Activated T-helper 1 cell treated with anti-CD3 and anti-CD28 coated beads, Interleukin-12 subunit alpha, Interleukin-12 subunit beta, Interleukin-2, Interleukin-4 antibody, amounts not matched to agents 30 ng/mL and 10 ng/mL and 1 ng/mL, durations not matched to agents 14 hours and 24 hours and 36 hours (primary cell): ENCODE measurements at regions of chr10 and their contacts with region 1.

Region 1: GRCh38 chr10:71850637-71851464 is at the start of gene PSAP:
- DNase-seq: peak; percentile 99
- H3K4me3 Mint-ChIP-seq: peak within 1 kb of the TSS; percentile 97
- H3K27ac Mint-ChIP-seq: peak within 1 kb of the TSS; percentile 85
- H3K4me1 Mint-ChIP-seq: peaks cover 42% of the 10 kb centered on the region
- H3K27me3 Mint-ChIP-seq: no peaks in the 10 kb centered on the region
- total RNA-seq, gene PSAP: 117 and 122 TPM in 2 replicates

Region 2: GRCh38 chr10:71372882-71373495 is 477.9 kb before region 1 on chr10:
- intact Hi-C with region 1: loop called (anchors 2 kb)
- DNase-seq: no peak
- H3K4me3 Mint-ChIP-seq: no peak overlapping the region
- H3K27ac Mint-ChIP-seq: no peak overlapping the region
- H3K4me1 Mint-ChIP-seq: peaks cover 14% of the 10 kb centered on the region
- H3K27me3 Mint-ChIP-seq: peaks cover 7% of the 10 kb centered on the region

Region 3: DNA sequence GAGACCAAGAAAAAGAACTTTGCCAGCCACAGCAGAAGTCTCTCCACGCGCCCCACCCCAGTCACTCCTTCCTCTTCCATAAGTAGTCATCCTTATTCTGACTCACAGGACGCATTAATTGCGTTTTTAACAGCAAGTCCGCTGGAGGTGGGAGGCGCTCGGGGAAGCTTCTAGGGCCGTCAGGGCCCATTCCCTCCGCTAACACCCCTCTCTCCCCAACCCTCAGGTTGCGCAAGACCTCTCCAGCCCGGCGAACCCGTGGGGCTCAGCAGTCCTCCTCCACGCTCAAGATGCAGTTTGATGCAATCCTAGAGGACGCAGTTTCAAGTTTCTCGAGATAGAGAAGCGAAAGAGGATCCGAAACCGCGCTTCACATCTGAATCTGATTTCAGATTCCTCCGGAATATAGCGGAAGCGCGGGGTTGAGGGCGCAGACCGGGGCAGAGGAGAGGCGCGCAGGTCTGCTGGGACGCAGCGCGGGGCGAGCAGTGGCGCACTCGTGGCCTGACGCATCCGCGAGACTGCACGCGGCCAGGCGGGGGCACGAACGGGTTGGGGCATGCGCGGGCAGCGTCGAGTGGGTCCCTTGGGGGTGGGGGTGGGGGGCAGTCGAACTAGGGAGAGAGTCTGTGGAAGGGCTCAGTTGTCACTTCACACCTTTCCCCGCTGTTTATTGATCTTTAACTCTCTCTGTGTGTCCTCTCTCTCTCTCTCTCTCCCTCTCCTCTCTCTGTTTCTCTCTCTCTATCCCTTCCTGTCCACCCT is 38.0 kb after region 1 on chr10:
- intact Hi-C with region 1: loop called (anchors 2 kb)
- DNase-seq: peak; percentile 44
- H3K4me3 Mint-ChIP-seq: peak overlapping the region; percentile 76
- H3K27ac Mint-ChIP-seq: peak overlapping the region; percentile 74
- H3K4me1 Mint-ChIP-seq: peaks cover 14% of the 10 kb centered on the region
- H3K27me3 Mint-ChIP-seq: peaks cover 13% of the 10 kb centered on the region

Region 4: DNA sequence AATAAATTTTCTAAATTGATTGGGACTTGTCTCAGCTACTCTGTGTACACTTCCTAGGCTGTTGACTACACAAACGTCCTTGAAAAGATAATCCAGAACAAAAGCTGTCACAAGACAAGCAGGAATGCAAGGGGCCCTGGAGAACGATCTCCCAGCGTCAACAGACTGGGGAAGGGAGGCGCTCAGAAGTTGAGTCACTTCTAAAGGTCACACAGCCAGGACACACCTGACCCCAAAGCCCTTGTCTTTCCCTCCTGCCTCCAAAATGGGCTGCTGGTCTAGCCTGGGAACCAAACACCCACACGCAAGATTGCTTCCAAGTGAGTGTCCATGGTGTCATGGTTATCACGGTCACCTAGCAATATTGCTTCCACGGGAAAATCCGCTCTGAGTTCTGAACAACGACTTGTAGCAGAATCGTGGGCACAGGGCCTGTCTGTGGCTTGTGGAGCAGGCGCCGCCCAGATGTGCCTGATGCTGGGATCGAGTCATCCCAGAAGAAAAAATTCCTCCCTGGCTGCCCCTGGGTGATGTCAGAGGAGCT is 187.7 kb after region 1 on chr10:
- intact Hi-C with region 1: no loop called
- DNase-seq: no peak
- H3K4me3 Mint-ChIP-seq: no peak overlapping the region
- H3K27ac Mint-ChIP-seq: no peak overlapping the region
- H3K4me1 Mint-ChIP-seq: no peaks in the 10 kb centered on the region
- H3K27me3 Mint-ChIP-seq: peaks cover 2% of the 10 kb centered on the region